PC-3 (cell line): ENCODE measurements at regions of chr5 and their contacts with region 1.

Region 1: DNA sequence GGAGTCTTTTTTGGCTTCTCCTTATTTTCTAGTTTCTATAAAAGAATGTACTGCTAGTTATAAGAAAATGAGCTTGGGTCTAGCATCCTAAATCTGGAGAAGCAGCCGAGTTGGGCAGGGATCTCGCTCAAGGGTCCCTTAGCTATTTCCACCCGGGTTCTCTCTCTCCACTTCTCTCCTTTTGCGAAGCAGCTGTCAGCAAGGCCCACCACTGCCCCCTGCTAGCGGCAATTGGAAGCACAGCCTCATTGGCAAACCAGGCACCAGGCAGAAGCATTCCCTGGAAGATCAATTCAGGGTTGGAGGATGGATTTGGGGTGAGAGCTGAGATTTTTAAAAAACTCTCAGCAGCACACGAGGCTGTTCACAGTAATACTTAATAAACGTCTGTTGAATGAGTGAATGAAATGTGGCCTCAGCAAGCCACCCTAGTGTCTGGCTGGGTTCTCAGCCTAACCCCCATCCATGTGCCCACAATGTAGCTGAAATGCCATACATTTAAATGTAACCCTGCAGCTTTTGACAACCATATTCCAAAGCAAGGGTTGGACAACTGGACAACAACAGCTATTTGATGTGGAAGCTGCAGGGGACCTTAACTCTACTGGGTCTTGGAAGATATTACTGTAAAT is 34.6 kb upstream of the TNIP1 start:
- DNase-seq: peak; percentile 77
- ATAC-seq: peak; percentile 86
- H3K4me3 ChIP-seq: no peak overlapping the region
- H3K27ac ChIP-seq: no peak overlapping the region
- H3K4me1 ChIP-seq: no peaks in the 10 kb centered on the region
- H3K27me3 ChIP-seq: no peaks in the 10 kb centered on the region
- CTCF ChIP-seq: peak; percentile 97

Region 2: DNA sequence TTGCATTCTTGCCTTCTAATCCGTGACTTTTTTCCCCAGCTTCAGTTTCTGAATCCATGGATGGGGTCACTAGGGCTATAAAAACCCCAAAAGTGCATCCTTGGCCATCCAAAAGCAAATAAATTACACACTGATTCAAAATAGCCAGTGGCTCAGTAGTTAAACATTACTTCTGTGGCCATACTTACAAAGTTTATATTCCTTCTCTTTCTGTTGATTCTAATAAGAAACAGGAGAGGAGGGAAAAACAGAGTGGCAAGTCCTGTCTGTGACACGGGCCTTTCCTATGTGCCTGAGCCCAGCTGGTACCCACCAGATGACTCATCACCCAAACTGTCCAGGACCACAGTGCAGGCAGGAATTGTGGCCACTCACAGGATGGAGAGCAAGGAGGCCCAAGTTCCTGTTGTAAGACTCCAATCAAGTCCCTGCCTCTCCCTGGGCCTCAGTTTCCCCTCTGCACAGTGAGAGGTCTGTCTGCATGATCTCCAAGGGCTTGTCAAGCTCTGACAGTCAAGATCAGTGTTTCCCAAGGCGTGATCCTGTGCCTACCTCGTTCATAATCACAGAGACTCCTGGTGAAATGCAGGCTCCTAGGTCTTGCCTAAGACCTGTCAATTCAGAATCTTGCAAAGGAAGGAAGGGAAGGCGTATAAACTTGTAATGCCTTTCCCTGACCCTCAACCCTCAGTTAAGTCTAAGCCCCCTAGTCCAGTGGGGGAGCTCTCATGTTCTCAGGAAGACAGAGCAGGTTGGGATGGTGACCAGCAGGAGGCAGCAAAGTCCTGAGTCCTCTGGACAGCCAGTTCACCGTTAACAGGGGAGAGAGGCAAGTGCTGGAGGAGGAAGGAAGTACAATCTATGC is 64.1 kb before region 1 on chr5:
- CTCF ChIA-PET with region 1: interaction called, 26 read pairs
- POLR2A ChIA-PET with region 1: no interaction called
- intact Hi-C with region 1: loop called (anchors 1 kb)
- DNase-seq: peak; percentile 84
- ATAC-seq: peak; percentile 78
- H3K4me3 ChIP-seq: no peak overlapping the region
- H3K27ac ChIP-seq: no peak overlapping the region
- H3K4me1 ChIP-seq: no peaks in the 10 kb centered on the region
- H3K27me3 ChIP-seq: no peaks in the 10 kb centered on the region
- CTCF ChIP-seq: peak; percentile 97